PC-3 (cell line): ENCODE measurements at regions of chr4 and their contacts with region 1.

Region 1: DNA sequence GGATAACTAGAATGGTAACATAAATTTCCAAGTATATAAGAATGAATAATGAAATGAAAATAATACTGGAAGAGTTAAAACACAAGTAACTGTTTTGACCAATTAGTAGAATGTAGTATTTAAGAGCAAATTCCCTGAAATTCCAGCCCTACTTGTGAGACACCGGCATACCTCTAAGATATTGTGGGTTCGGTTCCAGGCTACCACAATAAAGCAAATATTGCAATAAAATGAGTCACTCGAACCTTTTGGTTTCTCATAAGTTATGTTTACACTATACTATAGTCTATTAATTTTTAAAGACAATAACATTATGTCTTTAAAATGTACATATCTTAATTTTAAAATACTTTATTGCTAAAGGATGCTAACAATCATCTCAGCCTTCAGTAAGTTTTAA is 15.2 kb upstream of the IQCM start:
- DNase-seq: peak; percentile 76
- ATAC-seq: peak; percentile 76
- H3K4me3 ChIP-seq: no peak overlapping the region
- H3K27ac ChIP-seq: peak overlapping the region; percentile 89
- H3K4me1 ChIP-seq: peaks cover 36% of the 10 kb centered on the region
- H3K27me3 ChIP-seq: no peaks in the 10 kb centered on the region
- CTCF ChIP-seq: no peak

Region 2: GRCh38 chr4:149790172-149790907 is 40.5 kb before region 1 on chr4:
- CTCF ChIA-PET with region 1: no interaction called
- POLR2A ChIA-PET with region 1: no interaction called
- intact Hi-C with region 1: loop called (anchors 5 kb)
- DNase-seq: peak; percentile 14
- ATAC-seq: no peak; the same call in 1 of the 2 replicates
- H3K4me3 ChIP-seq: no peak overlapping the region
- H3K27ac ChIP-seq: no peak overlapping the region
- H3K4me1 ChIP-seq: peaks cover 26% of the 10 kb centered on the region
- H3K27me3 ChIP-seq: no peaks in the 10 kb centered on the region
- CTCF ChIP-seq: no peak

Region 3: DNA sequence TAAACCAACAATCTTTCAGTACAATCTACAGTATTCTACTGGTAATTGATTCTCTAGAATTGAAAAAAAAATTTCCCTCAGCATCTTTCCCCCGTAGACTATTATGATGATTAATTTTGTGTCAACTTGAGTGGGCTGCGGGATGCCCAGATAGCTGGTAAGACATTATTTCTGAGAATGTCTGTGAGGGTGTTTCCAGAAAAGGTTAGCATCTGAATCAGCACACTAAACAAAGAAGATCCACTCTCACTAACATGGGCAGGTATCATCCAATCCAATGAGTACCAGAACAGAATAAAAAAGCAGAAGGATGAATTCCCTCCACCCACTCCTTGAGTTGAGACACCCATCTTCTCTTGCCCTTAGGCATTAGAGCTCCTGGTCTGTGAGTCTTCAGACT is 565.0 kb after region 1 on chr4:
- CTCF ChIA-PET with region 1: no interaction called
- POLR2A ChIA-PET with region 1: no interaction called
- intact Hi-C with region 1: no loop called
- DNase-seq: no peak
- ATAC-seq: no peak
- H3K4me3 ChIP-seq: no peak overlapping the region
- H3K27ac ChIP-seq: no peak overlapping the region
- H3K4me1 ChIP-seq: no peaks in the 10 kb centered on the region
- H3K27me3 ChIP-seq: no peaks in the 10 kb centered on the region
- CTCF ChIP-seq: no peak